Activated CD4-positive, alpha-beta memory T cell treated with anti-CD3 and anti-CD28 coated beads for 36 hours (primary cell): ENCODE measurements at regions of chr12 and their contacts with region 1.

Region 1: GRCh38 chr12:107093417-107094182 is at the start of gene CRY1:
- DNase-seq: peak; percentile 95
- H3K4me3 Mint-ChIP-seq: no peak within 1 kb of the TSS
- H3K27ac Mint-ChIP-seq: no peak within 1 kb of the TSS
- H3K4me1 Mint-ChIP-seq: peaks cover 10% of the 10 kb centered on the region
- H3K27me3 Mint-ChIP-seq: peaks cover 8% of the 10 kb centered on the region
- total RNA-seq, gene CRY1: 23.5 to 24.1 TPM

Region 2: DNA sequence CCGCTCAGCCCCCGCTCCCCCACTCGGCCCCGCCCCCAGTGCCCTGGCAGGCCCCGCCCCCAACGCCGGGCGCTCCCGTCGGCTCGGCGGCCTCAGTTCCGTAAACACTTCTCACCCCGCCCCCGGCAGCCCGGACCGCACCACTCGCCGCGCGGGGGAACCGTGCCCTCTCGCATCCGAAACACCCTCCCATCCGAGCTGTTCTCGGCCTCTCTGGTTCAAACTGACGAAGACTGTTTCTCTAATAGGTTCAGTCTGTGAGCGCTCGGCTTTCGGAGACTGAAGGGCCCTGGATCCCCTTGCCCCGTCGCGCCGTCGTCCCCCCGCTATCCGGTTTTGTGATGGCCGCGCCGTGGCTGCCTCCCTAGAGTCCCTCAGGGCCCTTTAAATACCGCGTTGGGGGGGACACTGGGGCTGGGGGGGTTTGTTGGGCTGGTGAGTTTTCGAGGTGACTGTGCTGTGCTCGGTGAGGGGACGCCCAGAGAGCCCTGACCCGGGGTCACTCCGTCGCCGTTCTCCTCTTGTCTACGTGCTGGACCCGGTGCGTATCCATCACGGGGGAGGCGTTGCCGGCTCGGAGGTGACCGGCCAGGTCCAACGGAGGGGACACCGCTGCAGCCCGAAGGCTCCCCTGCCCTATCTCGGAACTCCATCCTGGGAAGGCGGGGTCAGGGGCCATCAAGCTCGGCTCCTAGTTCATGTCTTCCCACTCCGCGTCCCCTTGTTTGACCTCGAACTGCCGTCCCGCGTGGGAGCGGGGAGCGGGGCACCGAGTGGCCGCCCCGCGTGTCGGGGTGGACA is 791.0 kb before region 1 on chr12 and contains the start of gene TCP11L2:
- CTCF ChIA-PET with region 1: no interaction called
- POLR2A ChIA-PET with region 1: no interaction called
- intact Hi-C with region 1: loop called (anchors 5 kb)
- DNase-seq: peak; percentile 91
- H3K4me3 Mint-ChIP-seq: peak within 1 kb of the TSS; percentile 89
- H3K27ac Mint-ChIP-seq: peak within 1 kb of the TSS; percentile 99
- H3K4me1 Mint-ChIP-seq: peaks cover 52% of the 10 kb centered on the region
- H3K27me3 Mint-ChIP-seq: no peaks in the 10 kb centered on the region
- total RNA-seq, gene TCP11L2: 8.8 to 10.3 TPM

Region 3: DNA sequence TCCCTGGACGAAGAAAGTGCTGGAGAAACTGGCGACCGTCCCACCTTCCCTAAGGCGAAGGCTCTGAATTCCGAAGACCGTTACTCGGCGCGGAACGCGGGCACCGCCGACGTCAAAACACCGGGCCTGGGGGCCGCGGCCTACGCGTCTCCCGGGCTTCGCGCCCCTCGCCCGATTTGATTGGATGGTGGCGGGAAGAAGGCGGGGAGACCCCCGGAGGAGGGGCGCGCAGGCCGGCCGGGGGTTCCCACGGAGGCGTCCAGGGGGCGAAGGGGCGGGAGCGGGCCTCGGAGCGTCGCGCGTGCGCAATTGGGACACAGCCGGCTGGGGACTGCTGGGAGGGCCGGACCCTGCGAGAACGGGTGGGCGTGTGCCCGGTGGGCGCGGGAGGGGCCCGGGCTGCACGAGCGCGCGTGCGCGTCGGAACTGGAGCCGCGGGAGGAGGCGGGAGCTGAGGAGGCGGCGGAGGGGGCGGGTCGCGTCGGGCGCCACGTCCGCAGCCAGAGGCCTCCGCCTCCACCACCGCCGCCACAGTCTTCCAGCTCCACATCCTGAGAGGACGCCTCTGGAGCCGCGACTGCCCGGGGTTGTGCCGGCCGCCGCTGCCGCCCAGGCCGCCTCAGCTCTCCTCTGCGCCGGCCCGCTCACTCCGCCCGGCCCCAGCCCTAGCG is 138.1 kb before region 1 on chr12 and contains the start of gene TMEM263:
- CTCF ChIA-PET with region 1: interaction called, 5 read pairs
- POLR2A ChIA-PET with region 1: interaction called, 3 read pairs
- intact Hi-C with region 1: loop called (anchors 1 kb)
- DNase-seq: peak; percentile 94
- H3K4me3 Mint-ChIP-seq: peak within 1 kb of the TSS; percentile 96
- H3K27ac Mint-ChIP-seq: peak within 1 kb of the TSS; percentile 86
- H3K4me1 Mint-ChIP-seq: peaks cover 16% of the 10 kb centered on the region
- H3K27me3 Mint-ChIP-seq: no peaks in the 10 kb centered on the region
- total RNA-seq, gene TMEM263: 37.8 to 38.3 TPM

Region 4: DNA sequence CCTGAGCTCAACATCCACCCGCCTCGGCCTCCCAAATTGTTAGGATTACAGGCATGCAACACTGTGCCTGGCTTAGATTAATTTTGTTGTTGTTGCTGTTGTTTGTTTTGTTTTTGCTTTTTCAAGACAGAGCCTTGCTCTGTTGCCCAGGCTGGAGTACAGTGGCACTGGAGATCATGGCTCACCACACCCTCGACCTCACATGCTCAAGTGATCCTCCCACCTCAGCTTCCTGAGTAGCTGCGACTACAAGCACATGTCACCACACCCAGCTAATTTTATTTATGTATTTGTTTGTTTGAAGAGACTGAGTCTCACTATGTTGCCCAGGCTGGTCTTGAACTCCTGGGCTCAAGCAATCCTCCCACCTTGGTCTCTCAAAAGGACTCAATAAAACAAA is 26.9 kb before region 1 on chr12:
- CTCF ChIA-PET with region 1: no interaction called
- POLR2A ChIA-PET with region 1: no interaction called
- intact Hi-C with region 1: no loop called
- DNase-seq: no peak
- H3K4me3 Mint-ChIP-seq: no peak overlapping the region
- H3K27ac Mint-ChIP-seq: no peak overlapping the region
- H3K4me1 Mint-ChIP-seq: peaks cover 2% of the 10 kb centered on the region
- H3K27me3 Mint-ChIP-seq: no peaks in the 10 kb centered on the region

Region 5: DNA sequence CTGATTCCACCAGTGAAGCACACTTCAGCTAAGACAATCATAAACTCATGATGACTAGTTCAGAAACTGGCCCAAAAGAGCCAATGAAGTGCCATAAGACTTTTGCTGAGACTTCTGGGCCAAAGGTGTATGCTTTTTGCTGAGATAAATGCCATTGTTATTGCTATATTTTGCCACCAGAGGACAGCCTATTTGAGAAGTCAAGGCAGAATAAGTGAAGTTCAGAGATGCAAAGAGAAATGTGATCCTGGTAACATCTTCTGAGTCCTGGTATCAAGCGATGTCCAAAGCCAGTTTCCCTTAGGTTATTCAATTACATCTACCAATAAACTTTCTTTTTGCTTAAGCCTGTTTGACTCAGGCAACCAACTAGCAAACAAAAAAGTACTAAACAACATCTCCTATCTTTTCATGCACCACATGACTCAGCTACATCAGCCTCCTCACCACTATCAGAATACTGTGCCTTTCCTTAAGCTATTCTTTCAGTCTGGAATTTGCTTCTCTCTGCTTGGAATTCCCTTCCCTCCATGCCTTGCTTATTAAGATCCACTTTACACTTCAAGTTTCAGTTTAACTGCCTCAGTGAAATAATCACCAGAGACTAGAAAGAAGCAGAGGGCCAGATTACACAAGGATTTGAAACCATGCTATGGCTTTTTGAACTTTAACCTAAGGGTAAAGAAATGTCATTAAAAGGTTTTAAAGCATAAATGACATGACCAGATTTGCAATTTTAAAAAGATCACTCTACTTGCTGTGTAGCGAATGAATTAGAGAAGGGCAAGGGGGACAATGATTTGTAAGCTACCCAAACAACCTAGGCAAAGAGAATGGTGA is 14.2 kb before region 1 on chr12:
- CTCF ChIA-PET with region 1: interaction called, 11 read pairs
- POLR2A ChIA-PET with region 1: no interaction called
- intact Hi-C with region 1: loop called (anchors 2 kb)
- DNase-seq: no peak
- H3K4me3 Mint-ChIP-seq: no peak overlapping the region
- H3K27ac Mint-ChIP-seq: no peak overlapping the region
- H3K4me1 Mint-ChIP-seq: peaks cover 7% of the 10 kb centered on the region
- H3K27me3 Mint-ChIP-seq: no peaks in the 10 kb centered on the region

Region 6: DNA sequence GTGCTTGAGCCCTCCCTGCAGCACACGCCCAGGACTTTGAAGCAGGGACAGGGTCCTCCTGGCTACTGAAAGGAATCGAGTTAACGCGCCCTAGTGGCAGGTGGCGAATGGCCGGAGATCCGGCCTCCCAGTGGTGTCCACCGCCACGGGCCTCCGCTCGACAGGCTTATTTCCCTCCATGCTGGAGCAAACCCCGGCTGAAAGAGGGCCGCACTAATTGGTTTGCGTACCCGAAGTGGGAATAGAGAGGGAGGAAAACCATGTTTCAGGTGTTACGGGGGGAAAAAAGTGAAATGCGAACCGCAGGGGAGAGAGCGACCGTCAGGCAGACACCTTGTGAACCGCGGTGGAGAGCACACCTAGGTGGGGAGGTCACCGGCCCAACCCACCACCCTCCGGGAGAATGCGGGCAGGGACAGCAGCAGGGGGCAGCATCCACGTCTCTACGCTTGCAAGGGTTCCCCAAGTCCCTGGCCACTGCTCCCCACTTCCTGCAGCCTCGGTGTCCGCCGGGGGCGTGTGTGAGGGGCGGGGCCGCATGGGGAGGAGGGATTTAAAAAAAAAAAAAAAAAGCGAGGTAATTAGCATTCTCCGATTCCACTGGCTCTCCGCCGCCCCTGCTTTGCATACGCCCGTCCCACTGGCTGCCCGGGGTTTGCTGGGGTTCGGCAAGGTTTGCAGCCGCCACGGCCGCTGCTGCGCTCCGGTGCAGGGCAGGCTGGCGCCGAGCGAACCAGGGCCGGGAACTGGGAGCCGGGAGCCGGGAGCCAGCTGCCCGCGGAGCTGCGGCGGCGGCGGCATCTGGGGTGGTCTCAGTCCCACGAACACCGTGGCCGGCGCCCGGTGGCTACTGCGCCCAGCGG is 224.4 kb after region 1 on chr12:
- CTCF ChIA-PET with region 1: interaction called, 3 read pairs
- POLR2A ChIA-PET with region 1: no interaction called
- intact Hi-C with region 1: loop called (anchors 2 kb)
- DNase-seq: peak; percentile 93
- H3K4me3 Mint-ChIP-seq: peak overlapping the region; percentile 82
- H3K27ac Mint-ChIP-seq: no peak overlapping the region
- H3K4me1 Mint-ChIP-seq: peaks cover 26% of the 10 kb centered on the region
- H3K27me3 Mint-ChIP-seq: peaks cover 8% of the 10 kb centered on the region

Region 7: GRCh38 chr12:107501681-107502080 is 408.1 kb after region 1 on chr12:
- CTCF ChIA-PET with region 1: no interaction called
- POLR2A ChIA-PET with region 1: no interaction called
- intact Hi-C with region 1: no loop called
- DNase-seq: no peak
- H3K4me3 Mint-ChIP-seq: no peak overlapping the region
- H3K27ac Mint-ChIP-seq: no peak overlapping the region
- H3K4me1 Mint-ChIP-seq: peaks cover 5% of the 10 kb centered on the region
- H3K27me3 Mint-ChIP-seq: no peaks in the 10 kb centered on the region

Region 8: DNA sequence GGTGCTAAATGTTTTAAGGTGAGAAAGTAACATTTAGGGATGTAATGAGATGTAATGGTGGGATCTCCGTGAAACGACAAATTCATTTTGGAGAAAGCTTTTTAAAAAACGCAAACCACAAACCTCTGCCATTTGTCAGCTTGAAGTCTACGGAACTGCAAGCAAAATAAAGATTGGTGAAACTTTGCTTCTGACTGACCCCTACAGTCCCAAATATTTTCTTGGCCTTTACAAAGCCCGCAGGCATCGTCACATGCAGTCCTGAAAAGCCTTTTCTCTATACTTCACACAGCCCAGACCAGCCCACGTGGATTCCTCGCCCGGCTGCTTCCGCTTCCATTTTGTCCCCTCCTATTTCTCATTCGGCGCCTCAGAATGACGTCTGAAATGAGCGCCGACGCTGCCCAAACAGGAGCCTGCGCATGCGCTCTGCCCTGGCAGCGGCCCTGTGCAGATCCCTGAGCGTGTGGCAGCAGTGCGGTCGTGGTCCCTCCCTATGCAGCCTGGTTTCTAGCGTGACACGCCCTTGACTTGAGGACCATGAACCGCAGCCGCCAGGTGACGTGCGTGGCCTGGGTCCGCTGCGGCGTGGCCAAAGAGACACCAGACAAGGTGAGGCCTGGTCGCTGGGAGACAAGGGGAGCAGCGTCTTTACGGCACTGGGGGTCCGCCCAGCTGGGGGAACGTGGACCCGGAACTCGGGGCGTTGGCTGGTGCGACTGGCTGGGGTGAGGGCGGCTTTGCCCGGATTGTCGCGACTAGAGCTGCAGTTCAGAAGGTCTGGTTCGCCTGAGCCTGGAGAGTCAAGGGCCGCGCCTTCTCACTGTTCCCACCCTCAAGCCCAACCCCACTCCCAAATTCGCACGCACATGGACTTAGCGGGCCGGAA is 592.0 kb after region 1 on chr12 and contains the start of gene PWP1:
- CTCF ChIA-PET with region 1: no interaction called
- POLR2A ChIA-PET with region 1: no interaction called
- intact Hi-C with region 1: loop called (anchors 1 kb)
- DNase-seq: peak; percentile 96
- H3K4me3 Mint-ChIP-seq: peak within 1 kb of the TSS; percentile 92
- H3K27ac Mint-ChIP-seq: peak within 1 kb of the TSS; percentile 98
- H3K4me1 Mint-ChIP-seq: peaks cover 25% of the 10 kb centered on the region
- H3K27me3 Mint-ChIP-seq: peaks cover 1% of the 10 kb centered on the region
- total RNA-seq, gene PWP1: 44.0 to 47.0 TPM